ENCODE measurements at regions of chr9 and their contacts with region 1.

Region 1: GRCh38 chr9:87725900-87726709 is at the start of gene CTSL:
- DNase-seq: peak; percentile 76
- ATAC-seq: peak; percentile 95
- H3K4me3 ChIP-seq: peak within 1 kb of the TSS; percentile 45 to 76 (median 70)
- H3K27ac ChIP-seq: peak within 1 kb of the TSS; percentile 52
- H3K4me1 ChIP-seq: peaks cover 14% of the 10 kb centered on the region
- H3K27me3 ChIP-seq: peaks cover 0 to 6% of the 10 kb centered on the region in 2 experiments; a peak in 1 of 5 replicates
- CTCF ChIP-seq: peak; percentile 78
- EP300 ChIP-seq: no peak
- POLR2A ChIP-seq: peak; percentile 76 to 89
- RAD21 ChIP-seq: peak; percentile 36; the same call in 1 of the 2 replicates
- total RNA-seq, gene CTSL: 40.0 and 78.1 TPM in 2 replicates

Region 2: DNA sequence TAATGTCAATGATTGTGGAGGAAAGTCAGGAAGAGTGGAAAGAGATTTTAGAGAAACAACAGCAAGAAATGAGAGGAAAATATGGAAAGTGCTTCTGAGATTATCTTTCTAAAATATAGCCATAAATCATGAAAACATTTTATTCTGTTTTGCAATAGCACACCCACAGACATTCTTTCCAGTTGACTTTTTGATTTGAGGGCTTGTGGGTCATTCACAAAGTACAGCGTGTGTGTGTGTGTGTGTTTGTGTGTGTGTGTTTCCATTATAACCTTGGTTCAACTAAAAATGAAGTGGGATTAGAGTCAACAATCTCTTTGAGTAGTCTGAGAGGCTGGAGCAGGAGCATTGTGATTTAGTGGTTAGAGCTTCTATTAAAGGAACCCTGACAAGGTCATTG is 662.2 kb before region 1 on chr9:
- CTCF ChIA-PET with region 1: no interaction called
- POLR2A ChIA-PET with region 1: no interaction called
- in situ Hi-C with region 1: no loop called
- intact Hi-C with region 1: no loop called
- DNase-seq: no peak
- ATAC-seq: no peak
- H3K4me3 ChIP-seq: no peak overlapping the region
- H3K27ac ChIP-seq: no peak overlapping the region
- H3K4me1 ChIP-seq: no peaks in the 10 kb centered on the region
- H3K27me3 ChIP-seq: peaks cover 0 to 5% of the 10 kb centered on the region in 2 experiments; a peak in 1 of 5 replicates
- CTCF ChIP-seq: no peak
- EP300 ChIP-seq: no peak
- POLR2A ChIP-seq: no peak
- RAD21 ChIP-seq: no peak

Region 3: DNA sequence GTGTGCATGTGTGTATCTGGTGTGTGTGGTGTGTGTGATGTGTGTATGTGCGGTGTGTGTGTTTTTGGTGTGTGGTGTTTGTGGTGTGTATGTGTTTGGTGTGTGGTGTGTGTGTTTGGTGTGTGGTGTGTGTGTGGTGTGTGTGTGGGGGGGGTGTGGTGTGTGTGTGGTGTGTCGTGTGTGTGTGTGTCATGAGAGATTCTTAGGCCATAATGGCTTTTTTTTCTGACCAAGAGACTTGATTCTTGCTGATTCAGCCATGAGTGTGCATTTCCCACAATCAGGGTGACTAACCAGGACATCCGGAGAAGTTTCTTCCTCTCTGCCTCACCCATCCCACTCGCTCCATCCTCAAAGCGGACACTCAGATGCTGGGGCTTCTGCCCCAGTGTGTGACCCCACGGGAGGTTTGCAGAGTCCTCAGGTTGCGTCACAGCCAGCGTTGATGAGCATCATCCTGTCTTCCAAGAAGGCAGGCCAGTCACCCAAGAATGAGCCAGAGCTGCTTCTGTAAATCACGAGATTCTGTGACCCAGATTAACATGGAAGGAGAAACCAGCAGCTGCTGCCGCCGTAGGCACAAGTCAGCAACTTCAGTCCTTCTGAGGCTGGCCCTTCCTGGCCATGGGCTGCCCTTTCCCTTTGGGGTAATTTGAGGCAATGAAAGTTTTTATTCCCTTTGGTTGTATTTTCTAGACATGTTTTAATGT is 12.7 kb before region 1 on chr9:
- CTCF ChIA-PET with region 1: no interaction called
- POLR2A ChIA-PET with region 1: interaction called, 20 read pairs
- in situ Hi-C with region 1: no loop called
- intact Hi-C with region 1: no loop called
- DNase-seq: peak; percentile 62
- ATAC-seq: no peak
- H3K4me3 ChIP-seq: peak overlapping the region in 1 of 3 experiments; percentile 38; a peak in 1 of 6 replicates
- H3K27ac ChIP-seq: no peak overlapping the region
- H3K4me1 ChIP-seq: peaks cover 49% of the 10 kb centered on the region
- H3K27me3 ChIP-seq: peaks cover 0 to 3% of the 10 kb centered on the region in 2 experiments; a peak in 1 of 5 replicates
- CTCF ChIP-seq: no peak
- EP300 ChIP-seq: no peak
- POLR2A ChIP-seq: no peak
- RAD21 ChIP-seq: no peak

Region 4: DNA sequence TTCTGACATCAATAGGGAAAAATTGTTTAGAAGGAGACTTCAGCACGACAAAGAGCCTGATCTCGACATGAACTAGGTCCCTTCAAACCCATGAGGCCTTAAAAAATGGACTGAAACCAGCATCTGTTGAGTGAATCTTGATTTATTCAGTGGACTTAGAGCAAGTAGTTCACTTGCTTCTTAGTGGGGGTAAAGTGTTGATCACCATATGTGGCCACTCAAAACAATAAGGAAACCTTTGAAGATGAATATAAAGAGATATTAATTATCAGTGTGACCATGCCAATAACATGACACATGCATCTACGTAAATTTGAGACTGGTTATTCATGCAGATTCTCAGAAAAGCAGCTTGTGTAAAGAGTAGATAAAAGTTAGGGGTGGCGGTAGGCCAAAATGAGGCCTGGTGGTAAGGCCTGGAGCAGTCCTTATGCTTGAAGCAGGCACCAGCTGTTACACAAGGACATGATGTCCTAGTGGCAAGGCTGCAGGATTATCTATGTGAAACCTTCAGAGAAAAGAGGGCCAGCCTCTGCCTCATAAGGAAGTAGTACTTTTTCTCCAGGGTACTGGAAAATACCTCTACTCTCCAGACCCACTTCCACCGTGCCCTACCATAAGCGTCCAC is 1326.5 kb after region 1 on chr9:
- CTCF ChIA-PET with region 1: no interaction called
- POLR2A ChIA-PET with region 1: no interaction called
- in situ Hi-C with region 1: no loop called
- intact Hi-C with region 1: no loop called
- DNase-seq: no peak
- ATAC-seq: no peak
- H3K4me3 ChIP-seq: no peak overlapping the region
- H3K27ac ChIP-seq: no peak overlapping the region
- H3K4me1 ChIP-seq: no peaks in the 10 kb centered on the region
- H3K27me3 ChIP-seq: no peaks in the 10 kb centered on the region
- CTCF ChIP-seq: no peak
- EP300 ChIP-seq: no peak
- POLR2A ChIP-seq: no peak
- RAD21 ChIP-seq: no peak

Measured in HepG2 (cell line).